HEK293 (cell line): ENCODE measurements at regions of chr2 and their contacts with region 1.

Region 1: GRCh38 chr2:27370026-27370815 is at the starts of genes EIF2B4 and SNX17:
- H3K4me3 ChIP-seq: peak within 1 kb of the TSS; percentile 85
- H3K27ac ChIP-seq: peak within 1 kb of the TSS; percentile 79
- H3K4me1 ChIP-seq: no peaks in the 10 kb centered on the region
- CTCF ChIP-seq: peak; percentile 99

Region 2: DNA sequence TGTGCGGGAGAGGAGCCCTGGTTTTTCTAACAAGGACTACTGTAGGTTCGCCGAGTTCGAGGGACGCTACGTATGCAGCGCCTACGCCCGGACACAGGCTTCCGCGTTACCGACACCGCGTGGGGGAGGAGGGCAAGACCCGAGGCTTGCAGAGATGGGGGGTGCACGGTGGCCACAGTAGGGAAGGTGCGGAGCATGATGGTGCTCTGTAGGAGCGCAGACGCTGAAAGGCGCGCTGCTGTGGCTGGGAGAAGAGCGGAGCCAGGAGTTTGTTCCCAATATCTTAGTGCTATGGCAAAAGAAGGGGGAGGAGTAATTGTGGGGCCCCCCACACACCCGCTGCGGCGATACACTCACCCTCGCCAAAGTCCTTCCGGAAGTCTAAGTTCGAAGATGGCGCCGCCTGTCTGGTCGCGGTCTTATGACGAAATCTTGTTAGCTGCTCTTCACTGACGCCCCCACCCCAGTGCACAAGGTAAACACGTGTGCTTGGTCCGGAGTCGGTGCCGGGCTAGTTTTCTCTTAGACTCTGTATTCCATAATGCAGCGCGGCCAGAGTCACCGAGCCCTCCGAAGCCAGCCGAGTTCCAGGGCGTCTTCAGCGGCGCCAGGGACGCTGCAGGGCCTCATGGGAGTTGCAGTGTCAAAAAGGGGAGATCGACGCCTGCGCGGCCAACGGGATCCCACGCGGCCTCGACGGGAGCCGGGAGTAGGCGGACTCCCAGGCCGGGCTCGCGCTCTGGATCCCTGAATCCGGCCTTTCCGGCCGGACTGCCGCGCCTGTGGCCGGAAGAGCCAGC is 13.6 kb before region 1 on chr2 and contains the start of gene GTF3C2:
- CTCF ChIA-PET with region 1: interaction called, 4 read pairs
- POLR2A ChIA-PET with region 1: interaction called, 22 read pairs
- H3K4me3 ChIP-seq: peak within 1 kb of the TSS; percentile 99
- H3K27ac ChIP-seq: peak within 1 kb of the TSS; percentile 98
- H3K4me1 ChIP-seq: peaks cover 6% of the 10 kb centered on the region
- CTCF ChIP-seq: peak; percentile 68

Region 3: DNA sequence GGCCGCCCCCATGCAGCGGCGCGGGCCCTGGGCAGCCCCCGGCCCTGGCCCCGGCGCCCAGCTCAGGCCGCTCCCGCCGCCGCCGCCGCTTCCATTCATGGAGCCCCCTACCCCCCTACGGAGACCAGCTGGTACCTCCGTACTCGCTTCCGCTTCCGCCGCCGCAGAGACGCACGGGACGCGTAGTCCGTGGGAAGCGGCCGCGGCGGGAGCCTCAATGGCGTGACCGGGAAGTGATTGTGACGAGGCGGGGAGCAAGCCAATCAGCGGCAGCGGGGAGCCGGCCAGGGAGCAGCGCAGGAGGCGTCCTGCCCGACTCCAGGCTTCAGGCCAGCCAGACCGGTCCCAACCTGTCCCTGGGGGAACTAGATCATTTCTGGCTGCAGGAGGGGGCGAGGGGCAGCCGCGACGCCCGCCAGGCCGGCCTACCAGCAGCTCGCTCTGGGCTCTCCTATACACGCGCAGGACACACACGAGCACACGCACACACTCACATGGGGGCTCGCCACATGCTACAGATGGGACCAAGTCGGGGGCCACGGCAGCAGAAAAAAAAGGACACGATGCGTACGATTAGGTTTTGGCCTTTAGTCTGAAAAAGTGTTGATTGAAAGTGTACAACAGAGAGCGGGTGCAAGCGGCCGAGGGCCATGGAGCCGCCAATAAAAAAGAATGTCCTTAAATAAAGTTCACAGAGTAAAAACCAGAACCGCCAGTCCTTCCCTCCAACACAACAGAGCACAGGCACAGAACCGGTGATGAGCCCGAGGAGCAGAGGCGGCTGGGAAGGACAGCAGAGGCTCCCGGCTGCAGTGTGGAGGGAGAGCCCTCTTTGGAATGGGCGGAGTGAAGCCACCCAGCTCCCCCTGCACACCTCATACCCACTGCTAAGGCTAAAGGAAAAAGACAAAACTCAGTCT is 10.7 kb after region 1 on chr2 and contains the start of gene ZNF513:
- CTCF ChIA-PET with region 1: interaction called, 7 read pairs
- POLR2A ChIA-PET with region 1: interaction called, 19 read pairs
- H3K4me3 ChIP-seq: peak within 1 kb of the TSS; percentile 72
- H3K27ac ChIP-seq: peak within 1 kb of the TSS; percentile 82
- H3K4me1 ChIP-seq: no peaks in the 10 kb centered on the region; the same call in 1 of the 2 replicates
- CTCF ChIP-seq: no peak